Activated B cell treated with CpG ODN at 0.5 μM for 24 hours (primary cell): ENCODE measurements at regions of chr4 and their contacts with region 1.

Region 1: GRCh38 chr4:101785486-101785885 is 5.0 kb upstream of the BANK1 start:
- DNase-seq: no peak
- ATAC-seq: no peak
- H3K4me3 Mint-ChIP-seq: no peak overlapping the region
- H3K27ac Mint-ChIP-seq: no peak overlapping the region
- H3K4me1 Mint-ChIP-seq: peaks cover 53% of the 10 kb centered on the region
- H3K27me3 Mint-ChIP-seq: no peaks in the 10 kb centered on the region
- CTCF ChIP-seq: no peak

Region 2: DNA sequence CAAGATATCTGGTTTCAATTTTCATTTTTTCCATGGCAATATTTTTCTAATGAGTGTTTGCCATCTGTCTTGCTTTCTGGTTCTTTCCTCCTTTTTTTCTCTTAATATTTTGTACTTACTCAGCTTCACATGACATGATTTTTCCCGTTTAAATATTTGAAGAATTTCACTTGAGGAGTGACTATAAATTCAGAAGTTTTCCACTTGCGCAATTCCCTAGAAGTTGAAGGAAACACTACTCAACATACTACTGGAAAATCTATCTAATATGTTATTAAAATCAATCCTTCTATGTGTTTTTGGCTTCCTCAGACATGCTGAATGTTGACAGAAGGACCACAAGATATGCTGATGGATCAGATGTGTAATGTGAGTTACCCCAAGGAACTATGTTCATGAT is 31.8 kb before region 1 on chr4:
- CTCF ChIA-PET with region 1: no interaction called
- POLR2A ChIA-PET with region 1: no interaction called
- intact Hi-C with region 1: loop called (anchors 5 kb)
- DNase-seq: no peak
- ATAC-seq: no peak
- H3K4me3 Mint-ChIP-seq: no peak overlapping the region
- H3K27ac Mint-ChIP-seq: no peak overlapping the region
- H3K4me1 Mint-ChIP-seq: peaks cover 12% of the 10 kb centered on the region
- H3K27me3 Mint-ChIP-seq: no peaks in the 10 kb centered on the region
- CTCF ChIP-seq: no peak

Region 3: DNA sequence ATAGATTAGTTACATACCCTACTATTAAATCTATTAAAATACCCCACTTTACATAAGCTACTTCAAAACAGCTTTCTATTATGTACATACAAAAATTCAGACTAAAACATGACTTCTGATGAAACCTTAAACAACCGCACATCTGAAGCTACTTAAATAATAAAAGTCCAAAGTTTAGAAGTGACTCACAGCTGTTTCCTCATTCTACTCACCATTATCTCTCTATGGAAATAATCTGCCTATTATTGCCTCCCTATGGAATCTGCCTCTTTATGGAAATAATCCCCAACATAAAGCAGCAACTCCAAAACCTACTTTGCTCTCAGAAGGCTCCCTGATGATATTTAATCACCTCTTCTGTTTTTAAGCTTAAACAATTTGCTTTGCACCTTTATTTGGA is 10.7 kb before region 1 on chr4:
- CTCF ChIA-PET with region 1: no interaction called
- POLR2A ChIA-PET with region 1: no interaction called
- intact Hi-C with region 1: loop called (anchors 2 kb)
- DNase-seq: no peak
- ATAC-seq: no peak
- H3K4me3 Mint-ChIP-seq: no peak overlapping the region
- H3K27ac Mint-ChIP-seq: no peak overlapping the region
- H3K4me1 Mint-ChIP-seq: peaks cover 35% of the 10 kb centered on the region
- H3K27me3 Mint-ChIP-seq: no peaks in the 10 kb centered on the region
- CTCF ChIP-seq: no peak

Region 4: DNA sequence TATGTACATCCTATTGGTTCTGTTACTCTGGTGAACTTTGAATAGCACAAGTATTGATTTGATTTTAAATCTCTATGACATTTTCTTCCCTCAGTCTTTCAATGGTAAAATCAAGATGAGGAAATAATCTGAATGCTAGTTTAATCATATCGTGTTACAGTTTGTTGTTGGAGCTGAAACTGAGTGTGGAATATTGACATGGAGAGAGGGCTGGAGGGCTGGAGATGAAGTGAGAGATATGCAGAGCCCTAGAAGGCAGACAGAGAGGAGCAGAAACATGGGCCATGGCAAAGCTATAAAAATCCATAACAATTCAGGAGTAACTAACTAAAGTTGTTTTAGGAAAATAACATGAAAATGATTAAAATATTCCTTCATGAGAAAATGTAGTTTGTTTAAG is 146.1 kb after region 1 on chr4:
- CTCF ChIA-PET with region 1: no interaction called
- POLR2A ChIA-PET with region 1: no interaction called
- intact Hi-C with region 1: no loop called
- DNase-seq: no peak
- ATAC-seq: no peak
- H3K4me3 Mint-ChIP-seq: no peak overlapping the region
- H3K27ac Mint-ChIP-seq: peak overlapping the region; percentile 77
- H3K4me1 Mint-ChIP-seq: peaks cover 47% of the 10 kb centered on the region
- H3K27me3 Mint-ChIP-seq: no peaks in the 10 kb centered on the region
- CTCF ChIP-seq: no peak